Common myeloid progenitor, CD34-positive (primary cell): ENCODE measurements at regions of chr7 and their contacts with region 1.

Region 1: DNA sequence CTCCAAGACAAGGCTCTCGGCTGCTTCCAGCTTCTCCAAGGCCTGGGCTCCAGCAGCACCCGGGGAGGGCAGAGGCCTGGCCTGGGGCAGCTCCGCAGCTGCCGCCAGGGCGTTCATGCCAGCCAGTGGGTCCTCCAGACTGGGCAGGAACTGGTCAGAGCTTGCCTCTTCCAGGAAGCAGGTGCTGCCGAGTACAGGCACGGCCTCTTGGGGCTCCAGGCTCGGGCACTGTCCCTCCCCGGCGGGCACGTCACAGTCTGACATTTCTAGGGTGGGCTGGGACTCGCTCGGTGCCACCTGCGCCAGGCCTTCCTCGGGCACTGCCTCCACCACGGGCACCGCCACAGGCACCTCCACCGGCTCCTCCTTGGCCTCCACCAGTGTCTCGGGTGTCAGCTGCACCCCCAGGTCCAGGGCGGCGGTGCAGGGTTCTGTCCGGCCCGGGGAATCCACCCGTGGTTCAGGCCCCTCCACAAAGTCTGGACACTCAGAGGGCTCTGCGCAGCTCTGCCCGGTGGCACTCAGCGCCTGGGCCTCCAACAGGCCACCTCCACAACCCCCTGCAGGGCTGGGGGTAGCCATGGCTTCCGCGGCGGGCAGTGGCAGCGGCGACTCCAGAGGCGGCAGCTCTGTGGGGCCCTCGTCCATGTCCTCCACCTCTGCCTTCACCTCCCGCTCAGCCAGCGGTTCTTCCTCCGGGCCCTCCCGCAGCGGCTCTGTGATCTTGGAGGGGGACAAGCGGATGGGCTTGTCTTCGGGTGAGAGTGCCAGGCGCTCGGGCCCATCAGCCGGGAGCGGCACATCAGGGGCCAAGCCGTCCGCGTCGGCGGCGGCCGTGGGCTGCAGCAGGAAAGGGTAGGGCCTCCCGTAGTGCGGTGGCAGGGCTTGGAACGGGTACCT is 52.9 kb downstream of the TNRC18 start:
- DNase-seq: no peak
- H3K4me3 ChIP-seq: no peak overlapping the region
- H3K27ac ChIP-seq: no peak overlapping the region
- H3K4me1 ChIP-seq: peaks cover 0 to 7% (median 5%) of the 10 kb centered on the region in 4 experiments
- H3K27me3 ChIP-seq: no peaks in the 10 kb centered on the region

Region 2: DNA sequence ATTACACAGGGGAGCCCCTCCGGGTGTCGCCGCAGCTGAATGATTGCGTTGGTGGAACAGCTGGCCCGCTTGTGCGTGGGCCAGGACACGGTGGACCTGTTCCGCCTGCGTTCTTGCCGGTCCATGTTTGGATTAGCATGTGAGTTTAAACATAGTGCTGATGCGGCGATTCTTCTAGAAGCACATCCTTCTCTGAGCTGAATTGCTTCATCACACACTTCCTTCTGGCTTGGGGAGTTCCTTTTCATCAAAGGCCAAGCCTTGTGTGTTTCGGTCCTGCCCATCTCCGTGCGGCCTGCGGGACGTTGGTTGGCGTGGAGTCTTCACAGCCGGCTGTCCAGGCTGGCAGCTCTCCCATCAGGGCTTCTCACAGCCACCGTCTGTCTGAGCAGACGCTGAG is 133.4 kb before region 1 on chr7:
- CTCF ChIA-PET with region 1: interaction called, 11 read pairs
- POLR2A ChIA-PET with region 1: no interaction called
- DNase-seq: peak in 2 of 3 donors; percentile 35 to 56
- H3K4me3 ChIP-seq: peak overlapping the region in 2 of 7 experiments; percentile 14 to 47
- H3K27ac ChIP-seq: no peak overlapping the region
- H3K4me1 ChIP-seq: peaks cover 0 to 36% (median 30%) of the 10 kb centered on the region in 4 experiments
- H3K27me3 ChIP-seq: peaks cover 0 to 6% (median 0%) of the 10 kb centered on the region in 5 experiments

Region 3: DNA sequence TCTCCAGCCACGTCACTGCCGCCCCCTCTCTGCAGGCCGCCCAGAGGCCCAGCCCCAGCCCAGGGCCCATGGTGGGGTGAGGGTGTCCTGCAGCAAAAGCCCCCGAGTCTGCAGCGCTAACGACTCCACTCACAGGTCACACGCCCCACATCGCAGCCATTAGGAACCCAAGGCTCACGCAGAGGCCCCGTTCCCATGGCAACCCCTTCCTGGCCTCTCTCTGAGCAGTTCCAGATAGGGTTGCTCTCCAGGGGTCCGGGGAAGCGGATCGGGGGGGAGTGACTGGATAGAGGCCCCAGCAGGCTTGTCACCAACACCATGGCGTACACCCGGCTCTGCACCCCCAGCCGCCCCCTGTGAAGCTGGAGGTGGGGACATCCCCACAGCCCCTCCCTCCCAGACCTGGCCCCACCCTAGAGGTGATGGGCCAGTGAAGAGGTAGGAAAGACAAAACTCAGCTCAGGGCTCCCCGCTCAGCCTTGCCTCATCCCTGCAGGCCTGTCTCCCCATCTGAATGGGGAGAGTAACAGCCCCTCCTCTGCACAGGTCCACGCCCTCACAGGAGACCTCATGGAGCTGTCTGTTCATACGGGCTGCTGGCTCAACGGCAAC is 11.7 kb after region 1 on chr7:
- CTCF ChIA-PET with region 1: interaction called, 14 read pairs
- POLR2A ChIA-PET with region 1: no interaction called
- DNase-seq: peak; percentile 25 to 67 (median 67)
- H3K4me3 ChIP-seq: peak overlapping the region in 2 of 7 experiments; percentile 2 to 7
- H3K27ac ChIP-seq: peak overlapping the region in 1 of 2 experiments; percentile 70
- H3K4me1 ChIP-seq: peaks cover 0 to 30% (median 21%) of the 10 kb centered on the region in 4 experiments
- H3K27me3 ChIP-seq: no peaks in the 10 kb centered on the region